SK-N-SH (cell line): ENCODE measurements at regions of chr3 and their contacts with region 1.

Region 1: DNA sequence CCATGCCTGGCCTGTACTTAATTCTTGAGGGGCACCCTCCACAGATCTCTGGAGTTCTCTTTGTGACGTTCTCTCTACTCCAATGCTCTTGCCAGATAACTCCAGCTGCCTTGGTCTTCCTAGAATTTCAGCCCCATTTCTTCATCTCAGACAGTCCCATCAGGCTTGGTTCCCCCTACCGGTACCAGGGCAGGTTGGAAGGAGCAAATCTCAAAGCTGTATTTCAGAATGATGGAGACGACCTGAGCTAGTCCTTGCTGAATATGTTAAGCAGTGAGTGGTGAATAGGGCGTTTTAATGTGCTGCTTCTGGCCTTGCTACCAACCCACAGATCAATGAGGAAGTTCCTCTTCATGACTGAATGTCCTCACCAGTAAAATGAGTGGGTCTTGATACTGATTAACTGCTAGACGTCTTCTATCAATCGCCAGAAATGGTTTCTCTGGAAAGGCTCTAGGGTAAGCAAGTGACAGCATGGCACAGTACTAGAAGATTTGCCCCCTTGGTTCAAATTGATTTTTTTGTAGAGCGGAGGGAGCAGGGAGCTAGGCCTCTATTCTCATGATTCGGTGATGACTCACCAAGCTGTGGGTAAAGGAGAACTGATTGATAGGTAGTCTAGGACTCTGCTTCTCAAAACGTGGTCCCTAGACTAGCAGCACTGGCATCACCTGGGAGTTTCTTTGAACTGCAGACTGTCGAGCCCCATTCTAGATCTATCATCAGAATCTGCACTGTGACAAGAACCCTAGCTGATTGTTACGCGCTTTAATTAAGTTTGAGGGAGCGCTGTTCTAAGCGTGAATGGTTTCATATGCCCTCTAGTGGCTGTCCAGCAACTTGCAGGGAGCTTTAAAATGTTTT is 67.8 kb downstream of the UBP1 start:
- DNase-seq: peak; percentile 55
- H3K4me3 ChIP-seq: no peak overlapping the region; a peak in 1 of 4 replicates
- H3K27ac ChIP-seq: no peak overlapping the region
- H3K4me1 ChIP-seq: peaks cover 0 to 3% of the 10 kb centered on the region in 2 experiments; a peak in 1 of 4 replicates
- H3K27me3 ChIP-seq: no peaks in the 10 kb centered on the region
- CTCF ChIP-seq: peak; percentile 99
- EP300 ChIP-seq: no peak
- RAD21 ChIP-seq: peak; percentile 84

Region 2: GRCh38 chr3:32401556-32402081 is 970.8 kb before region 1 on chr3:
- CTCF ChIA-PET with region 1: no interaction called
- POLR2A ChIA-PET with region 1: no interaction called
- DNase-seq: peak; percentile 91
- H3K4me3 ChIP-seq: peak overlapping the region; percentile 40 to 54
- H3K27ac ChIP-seq: peak overlapping the region; percentile 76 to 97
- H3K4me1 ChIP-seq: peaks cover 7 to 8% of the 10 kb centered on the region in 2 experiments; a peak in 3 of 4 replicates
- H3K27me3 ChIP-seq: no peaks in the 10 kb centered on the region
- CTCF ChIP-seq: no peak
- EP300 ChIP-seq: no peak
- RAD21 ChIP-seq: no peak

Region 3: DNA sequence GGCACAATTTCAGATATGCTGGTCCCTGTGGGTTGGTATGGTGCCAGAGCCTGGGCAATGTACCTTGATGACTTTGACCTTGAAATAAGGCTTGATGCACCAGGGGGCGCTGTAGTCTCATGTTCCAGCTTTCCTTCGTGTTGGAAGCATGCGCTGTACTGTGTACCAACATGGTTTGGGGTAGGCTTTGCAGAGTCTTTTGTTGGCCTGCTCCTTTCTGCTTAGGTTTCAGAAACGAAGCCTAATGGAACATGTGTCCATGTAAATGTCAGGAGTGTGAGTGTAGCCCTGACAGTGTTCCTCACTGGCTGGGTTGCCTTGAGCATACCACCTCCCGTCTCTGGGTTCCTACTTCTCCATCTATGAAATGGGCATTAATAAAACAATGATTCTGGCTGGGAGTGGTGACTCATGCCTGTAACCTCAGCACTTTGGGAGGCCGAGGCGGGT is 424.6 kb before region 1 on chr3:
- CTCF ChIA-PET with region 1: interaction called, 38 read pairs
- POLR2A ChIA-PET with region 1: no interaction called
- DNase-seq: peak; percentile 58
- H3K4me3 ChIP-seq: no peak overlapping the region; a peak in 1 of 4 replicates
- H3K27ac ChIP-seq: no peak overlapping the region
- H3K4me1 ChIP-seq: no peaks in the 10 kb centered on the region
- H3K27me3 ChIP-seq: no peaks in the 10 kb centered on the region
- CTCF ChIP-seq: peak; percentile 78
- EP300 ChIP-seq: no peak
- RAD21 ChIP-seq: peak; percentile 89

Region 4: DNA sequence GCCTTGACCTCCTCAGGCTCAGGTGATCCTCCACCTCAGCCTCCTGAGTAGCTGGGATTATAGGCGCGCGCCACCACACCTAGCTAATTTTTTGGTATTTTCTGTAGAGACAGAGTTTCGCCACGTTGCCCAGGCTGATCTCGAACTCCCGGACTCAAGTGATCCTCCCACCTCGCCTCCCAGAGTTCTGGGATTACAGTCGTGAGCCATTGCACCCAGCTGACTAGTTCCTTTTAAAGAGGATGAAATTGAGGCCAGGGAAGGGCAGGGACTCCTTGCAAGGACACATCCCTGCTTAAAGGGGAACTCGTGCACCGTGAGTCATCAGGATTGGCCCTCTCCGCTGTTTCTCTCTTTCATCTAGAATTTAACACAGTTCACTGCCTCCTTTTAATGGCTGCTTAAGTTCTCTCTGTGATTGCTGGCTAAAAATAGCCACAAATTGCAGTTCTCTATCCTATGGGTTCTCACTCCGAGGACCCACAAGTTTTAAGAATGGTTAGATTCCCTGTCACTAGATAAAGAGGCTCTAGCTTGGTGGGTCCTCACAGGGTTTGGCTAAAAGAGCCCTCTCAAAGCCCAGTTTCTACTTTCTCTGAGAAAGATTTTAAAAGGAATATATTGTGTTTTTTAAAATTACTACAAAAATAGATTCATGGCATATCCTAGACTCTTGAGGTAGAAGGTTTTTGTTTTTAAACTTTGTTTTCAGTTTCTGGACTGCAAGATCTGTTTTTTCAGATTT is 257.3 kb before region 1 on chr3:
- CTCF ChIA-PET with region 1: interaction called, 27 read pairs
- POLR2A ChIA-PET with region 1: no interaction called
- DNase-seq: no peak
- H3K4me3 ChIP-seq: peak overlapping the region; percentile 73 to 78; a peak in 3 of 4 replicates
- H3K27ac ChIP-seq: peak overlapping the region in 1 of 2 experiments; percentile 89; a peak in 2 of 4 replicates
- H3K4me1 ChIP-seq: peaks cover 7 to 14% of the 10 kb centered on the region in 2 experiments; a peak in 3 of 4 replicates
- H3K27me3 ChIP-seq: no peaks in the 10 kb centered on the region
- CTCF ChIP-seq: no peak
- EP300 ChIP-seq: no peak
- RAD21 ChIP-seq: no peak

Region 5: DNA sequence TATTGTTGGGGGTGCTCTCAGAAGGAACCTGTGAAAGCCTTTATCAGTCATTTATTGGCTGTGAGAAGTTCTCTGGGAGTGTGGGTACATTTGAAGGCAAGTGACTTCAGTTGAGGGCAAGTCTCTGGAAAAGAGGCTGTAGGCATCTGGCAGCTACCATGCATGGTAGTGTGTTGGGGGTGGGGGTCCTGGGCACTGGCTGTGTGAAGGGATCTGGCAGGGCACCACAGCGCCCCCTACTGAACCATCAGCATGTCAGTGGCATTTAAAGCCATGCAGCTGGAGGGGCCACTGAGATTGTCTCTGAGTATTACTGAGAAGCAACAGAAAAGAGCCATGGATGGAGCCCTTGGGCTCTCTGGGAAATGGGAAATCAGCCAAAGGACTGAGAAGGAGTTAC is 228.0 kb before region 1 on chr3:
- CTCF ChIA-PET with region 1: interaction called, 25 read pairs
- POLR2A ChIA-PET with region 1: no interaction called
- DNase-seq: no peak
- H3K4me3 ChIP-seq: no peak overlapping the region
- H3K27ac ChIP-seq: no peak overlapping the region
- H3K4me1 ChIP-seq: 0 out of 4 replicates have a peak, but pooled peaks cover 0 to 9% of the 10 kb centered on the region in 2 experiments
- H3K27me3 ChIP-seq: no peaks in the 10 kb centered on the region
- CTCF ChIP-seq: peak; percentile 52
- EP300 ChIP-seq: no peak
- RAD21 ChIP-seq: no peak

Region 6: DNA sequence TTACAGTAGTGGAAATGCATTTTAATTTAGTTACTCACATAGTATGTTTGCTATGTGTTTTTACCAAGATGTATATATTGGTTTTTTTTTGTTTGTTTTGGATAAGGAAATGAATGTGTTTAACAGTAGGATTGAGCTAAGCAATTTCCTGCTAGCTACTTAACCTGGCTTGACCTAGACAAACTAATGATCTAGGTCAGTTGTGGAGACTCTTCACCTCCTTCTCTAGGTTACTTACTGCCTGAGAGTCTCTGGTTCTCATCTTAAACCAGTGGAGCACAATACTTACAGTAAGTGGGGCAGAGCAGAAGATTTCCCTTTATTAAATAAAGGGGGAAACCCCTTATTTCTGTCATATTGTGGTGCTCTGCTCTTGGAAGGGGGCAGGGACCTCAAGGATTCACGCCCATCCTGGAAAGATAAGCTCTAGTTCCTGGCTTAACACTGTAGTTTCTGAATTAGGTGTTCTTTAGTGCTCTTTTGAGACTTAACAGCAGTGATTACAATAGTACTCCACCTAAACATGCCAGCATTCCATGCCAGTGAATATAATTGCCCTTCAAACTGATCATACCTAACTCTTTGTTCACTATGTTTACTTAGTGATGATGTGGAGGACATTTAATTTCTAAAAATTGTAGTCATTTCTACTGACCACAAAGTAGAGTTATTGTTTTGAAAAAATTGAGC is 12.2 kb before region 1 on chr3:
- CTCF ChIA-PET with region 1: interaction called, 56 read pairs
- POLR2A ChIA-PET with region 1: no interaction called
- DNase-seq: no peak
- H3K4me3 ChIP-seq: peak overlapping the region in 1 of 2 experiments; percentile 10; a peak in 1 of 4 replicates
- H3K27ac ChIP-seq: peak overlapping the region; percentile 11 to 87; a peak in 3 of 4 replicates
- H3K4me1 ChIP-seq: peaks cover 0 to 12% of the 10 kb centered on the region in 2 experiments; a peak in 1 of 4 replicates
- H3K27me3 ChIP-seq: no peaks in the 10 kb centered on the region
- CTCF ChIP-seq: no peak
- EP300 ChIP-seq: peak in 1 of 2 experiments; percentile 65; a peak in 1 of 4 replicates
- RAD21 ChIP-seq: no peak

Region 7: DNA sequence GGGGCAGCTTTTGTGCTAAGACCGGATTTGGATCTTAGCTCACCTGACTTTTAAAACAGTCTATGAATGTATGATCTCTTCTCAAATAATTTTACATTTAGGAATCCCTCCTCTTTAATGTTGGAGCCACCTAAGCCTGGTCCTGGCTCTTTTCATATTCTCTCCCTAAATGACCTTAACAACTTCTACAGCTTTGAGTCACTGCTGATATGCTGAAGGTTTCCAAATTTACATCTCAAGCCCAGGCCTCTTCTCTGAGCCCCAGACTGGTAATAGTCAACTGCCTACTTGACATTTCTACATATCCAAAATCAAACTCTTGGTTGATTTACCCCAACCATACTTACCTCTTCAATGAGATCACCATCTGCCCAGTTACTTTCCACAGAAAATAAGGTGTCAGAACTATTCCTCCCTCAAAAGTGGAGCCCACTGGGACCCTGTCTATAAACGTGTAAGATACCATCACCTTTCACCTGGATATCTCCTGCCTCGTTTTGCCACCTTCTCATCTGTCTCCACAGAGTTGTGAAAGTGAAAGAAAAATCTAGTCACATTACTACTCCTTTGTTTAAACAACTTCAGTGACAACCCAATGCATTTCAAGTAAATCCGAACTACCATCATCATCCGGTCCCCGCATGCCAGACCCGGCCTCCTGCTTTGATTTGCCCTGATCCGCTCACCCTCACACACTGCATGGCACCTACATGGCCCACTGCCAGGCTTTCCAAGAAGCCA is 19.0 kb after region 1 on chr3:
- CTCF ChIA-PET with region 1: interaction called, 48 read pairs
- POLR2A ChIA-PET with region 1: interaction called, 4 read pairs
- DNase-seq: no peak
- H3K4me3 ChIP-seq: no peak overlapping the region
- H3K27ac ChIP-seq: peak overlapping the region in 1 of 2 experiments; percentile 95; a peak in 3 of 4 replicates
- H3K4me1 ChIP-seq: peaks cover 13 to 48% of the 10 kb centered on the region in 2 experiments
- H3K27me3 ChIP-seq: no peaks in the 10 kb centered on the region
- CTCF ChIP-seq: no peak
- EP300 ChIP-seq: no peak
- RAD21 ChIP-seq: no peak

Region 8: GRCh38 chr3:33440323-33441232 is 68.1 kb after region 1 on chr3 and contains the start of gene UBP1:
- CTCF ChIA-PET with region 1: interaction called, 10 read pairs
- POLR2A ChIA-PET with region 1: no interaction called
- DNase-seq: peak; percentile 96
- H3K4me3 ChIP-seq: peak within 1 kb of the TSS; percentile 78 to 97
- H3K27ac ChIP-seq: peak within 1 kb of the TSS; percentile 99
- H3K4me1 ChIP-seq: peaks cover 14 to 16% of the 10 kb centered on the region in 2 experiments; a peak in 3 of 4 replicates
- H3K27me3 ChIP-seq: no peaks in the 10 kb centered on the region
- CTCF ChIP-seq: no peak
- EP300 ChIP-seq: no peak
- RAD21 ChIP-seq: no peak
- polyA plus RNA-seq, gene UBP1: 45.5 and 64.0 TPM in 2 replicates

Region 9: DNA sequence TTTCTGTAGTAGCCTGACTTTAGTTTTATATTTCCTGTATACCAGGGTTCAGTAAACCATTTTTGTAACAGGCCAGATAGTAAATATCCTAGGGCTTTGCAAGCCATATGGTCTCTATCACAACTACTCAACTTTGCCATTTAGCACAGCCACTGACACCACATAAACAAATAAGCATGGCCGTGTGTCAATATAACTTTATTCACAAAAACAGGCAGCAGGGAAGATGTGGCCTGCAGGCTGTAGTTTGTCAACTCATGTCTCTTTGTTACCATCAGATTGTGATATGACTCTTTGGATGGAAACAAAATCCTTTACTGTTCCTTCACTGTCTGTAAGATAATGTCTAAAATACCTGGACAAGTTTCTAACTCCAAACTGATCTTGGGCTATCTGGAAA is 191.0 kb after region 1 on chr3:
- CTCF ChIA-PET with region 1: no interaction called
- POLR2A ChIA-PET with region 1: no interaction called
- DNase-seq: no peak
- H3K4me3 ChIP-seq: no peak overlapping the region
- H3K27ac ChIP-seq: no peak overlapping the region; a peak in 1 of 4 replicates
- H3K4me1 ChIP-seq: no peaks in the 10 kb centered on the region
- H3K27me3 ChIP-seq: no peaks in the 10 kb centered on the region
- CTCF ChIP-seq: no peak
- EP300 ChIP-seq: no peak
- RAD21 ChIP-seq: no peak